CD4-positive, alpha-beta memory T cell (primary cell): ENCODE measurements at regions of chr19 and their contacts with region 1.

Region 1: GRCh38 chr19:29714953-29715700 is at the start of gene C19orf12:
- DNase-seq: peak in 4 of 5 donors; percentile 53 to 86 (median 80)
- H3K4me3 ChIP-seq: peak within 1 kb of the TSS; percentile 80 to 84
- H3K4me3 Mint-ChIP-seq: peak within 1 kb of the TSS; percentile 88 to 95 (median 92)
- H3K27ac ChIP-seq: peak within 1 kb of the TSS; percentile 88
- H3K27ac Mint-ChIP-seq: peak within 1 kb of the TSS; percentile 95 to 98 (median 98)
- H3K4me1 ChIP-seq: peaks cover 56% of the 10 kb centered on the region
- H3K4me1 Mint-ChIP-seq: peaks cover 41 to 60% (median 52%) of the 10 kb centered on the region in 4 donors
- H3K27me3 ChIP-seq: no peaks in the 10 kb centered on the region
- H3K27me3 Mint-ChIP-seq: no peaks in the 10 kb centered on the region
- total RNA-seq, gene C19orf12: 29.3 to 30.1 TPM

Region 2: DNA sequence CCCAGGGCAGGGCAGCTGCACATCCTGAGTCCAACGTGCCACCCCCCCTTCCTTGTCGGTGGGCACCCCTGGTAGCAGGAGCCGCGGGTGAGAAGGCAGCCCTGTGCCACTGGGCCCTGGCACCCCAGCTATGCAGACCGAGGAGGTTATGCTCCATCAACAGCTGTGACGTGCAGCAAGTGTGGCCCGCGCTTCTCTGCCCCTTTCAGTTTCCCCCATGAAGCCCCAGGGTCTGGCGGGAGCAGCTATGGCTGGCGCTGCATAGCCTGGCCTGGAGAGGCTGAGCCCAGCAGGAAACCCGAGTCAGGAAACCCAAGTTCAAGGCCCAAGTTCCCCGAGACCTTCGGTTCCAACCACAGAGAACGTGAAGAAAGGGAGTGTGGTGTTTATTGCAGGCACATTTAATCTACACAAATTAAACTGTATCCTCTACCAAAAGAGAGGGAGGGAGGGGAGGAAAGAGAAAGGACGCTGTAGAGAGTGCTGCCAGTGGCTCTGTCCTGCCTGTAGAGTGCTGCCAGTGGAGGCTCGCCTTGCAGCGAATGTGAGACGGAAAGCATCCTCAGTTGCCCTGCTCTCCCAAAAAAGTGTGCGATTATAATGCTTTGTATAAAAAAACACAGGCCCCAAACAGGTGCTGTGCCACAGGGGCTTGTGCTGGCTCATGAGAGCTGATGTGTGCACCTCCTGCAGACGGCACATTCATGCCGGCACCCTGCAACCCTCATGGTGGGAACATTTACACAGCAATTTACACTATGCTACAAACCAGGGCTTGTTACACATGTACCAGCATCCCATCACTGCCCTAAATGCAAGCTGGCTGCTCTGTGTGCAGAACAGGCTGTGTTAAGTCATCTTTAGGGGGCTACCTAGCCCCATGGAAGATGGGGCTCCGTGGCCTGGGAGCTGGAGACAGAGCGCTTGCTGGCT is 92.7 kb before region 1 on chr19:
- CTCF ChIA-PET with region 1: interaction called, 9 read pairs
- POLR2A ChIA-PET with region 1: interaction called, 11 read pairs
- intact Hi-C with region 1: no loop called
- DNase-seq: peak; percentile 22 to 55 (median 36)
- H3K4me3 ChIP-seq: no peak overlapping the region
- H3K4me3 Mint-ChIP-seq: peak overlapping the region in 7 of 8 donors; percentile 19 to 85 (median 71)
- H3K27ac ChIP-seq: peak overlapping the region; percentile 35
- H3K27ac Mint-ChIP-seq: peak overlapping the region; percentile 73 to 94 (median 91)
- H3K4me1 ChIP-seq: peaks cover 52% of the 10 kb centered on the region
- H3K4me1 Mint-ChIP-seq: peaks cover 40 to 56% (median 47%) of the 10 kb centered on the region in 4 donors
- H3K27me3 ChIP-seq: no peaks in the 10 kb centered on the region
- H3K27me3 Mint-ChIP-seq: no peaks in the 10 kb centered on the region

Region 3: GRCh38 chr19:29671393-29672160 is 43.5 kb before region 1 on chr19:
- CTCF ChIA-PET with region 1: interaction called, 142 read pairs
- POLR2A ChIA-PET with region 1: interaction called, 138 read pairs
- intact Hi-C with region 1: loop called (anchors 1 kb)
- DNase-seq: peak; percentile 81 to 96 (median 86)
- H3K4me3 ChIP-seq: peak overlapping the region; percentile 14 to 46
- H3K4me3 Mint-ChIP-seq: peak overlapping the region; percentile 62 to 96 (median 76)
- H3K27ac ChIP-seq: peak overlapping the region; percentile 92
- H3K27ac Mint-ChIP-seq: peak overlapping the region; percentile 93 to 100 (median 98)
- H3K4me1 ChIP-seq: peaks cover 97% of the 10 kb centered on the region
- H3K4me1 Mint-ChIP-seq: peaks cover 58 to 96% (median 79%) of the 10 kb centered on the region in 4 donors
- H3K27me3 ChIP-seq: no peaks in the 10 kb centered on the region
- H3K27me3 Mint-ChIP-seq: no peaks in the 10 kb centered on the region

Region 4: GRCh38 chr19:29700498-29700897 is 14.6 kb before region 1 on chr19:
- CTCF ChIA-PET with region 1: interaction called, 278 read pairs
- POLR2A ChIA-PET with region 1: interaction called, 12 read pairs
- intact Hi-C with region 1: no loop called
- DNase-seq: no peak
- H3K4me3 ChIP-seq: no peak overlapping the region
- H3K4me3 Mint-ChIP-seq: no peak overlapping the region
- H3K27ac ChIP-seq: no peak overlapping the region
- H3K27ac Mint-ChIP-seq: no peak overlapping the region
- H3K4me1 ChIP-seq: peaks cover 6% of the 10 kb centered on the region
- H3K4me1 Mint-ChIP-seq: peaks cover 3 to 16% (median 6%) of the 10 kb centered on the region in 4 donors
- H3K27me3 ChIP-seq: no peaks in the 10 kb centered on the region
- H3K27me3 Mint-ChIP-seq: no peaks in the 10 kb centered on the region